ENCODE measurements at regions of chr3 and their contacts with region 1.

Region 1: DNA sequence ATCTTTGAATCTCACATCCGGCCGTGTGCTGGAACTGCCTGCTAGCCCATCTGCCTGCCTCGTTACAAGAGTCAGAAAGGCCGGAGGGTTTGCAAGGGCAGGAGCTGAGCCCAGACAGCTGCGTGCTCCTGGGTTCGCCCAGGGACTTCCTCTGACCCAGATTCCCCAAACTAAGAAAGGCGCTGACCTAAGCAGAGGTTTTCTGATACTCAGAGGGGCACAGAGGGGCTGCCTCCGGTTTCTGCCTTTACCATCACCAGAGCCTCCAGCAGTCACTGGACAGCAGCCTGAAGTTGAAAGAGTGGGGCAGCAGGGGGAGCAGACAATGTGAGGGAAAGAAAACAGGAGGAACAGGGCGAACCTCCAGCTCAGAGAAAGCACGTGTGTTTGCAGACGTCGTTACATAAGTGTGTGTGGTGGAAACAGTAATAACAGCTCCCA is 33.4 kb upstream of the RAD18 start:
- DNase-seq: no peak
- H3K4me3 ChIP-seq: no peak overlapping the region
- H3K27ac ChIP-seq: no peak overlapping the region
- H3K4me1 ChIP-seq: no peaks in the 10 kb centered on the region
- CTCF ChIP-seq: no peak

Region 2: DNA sequence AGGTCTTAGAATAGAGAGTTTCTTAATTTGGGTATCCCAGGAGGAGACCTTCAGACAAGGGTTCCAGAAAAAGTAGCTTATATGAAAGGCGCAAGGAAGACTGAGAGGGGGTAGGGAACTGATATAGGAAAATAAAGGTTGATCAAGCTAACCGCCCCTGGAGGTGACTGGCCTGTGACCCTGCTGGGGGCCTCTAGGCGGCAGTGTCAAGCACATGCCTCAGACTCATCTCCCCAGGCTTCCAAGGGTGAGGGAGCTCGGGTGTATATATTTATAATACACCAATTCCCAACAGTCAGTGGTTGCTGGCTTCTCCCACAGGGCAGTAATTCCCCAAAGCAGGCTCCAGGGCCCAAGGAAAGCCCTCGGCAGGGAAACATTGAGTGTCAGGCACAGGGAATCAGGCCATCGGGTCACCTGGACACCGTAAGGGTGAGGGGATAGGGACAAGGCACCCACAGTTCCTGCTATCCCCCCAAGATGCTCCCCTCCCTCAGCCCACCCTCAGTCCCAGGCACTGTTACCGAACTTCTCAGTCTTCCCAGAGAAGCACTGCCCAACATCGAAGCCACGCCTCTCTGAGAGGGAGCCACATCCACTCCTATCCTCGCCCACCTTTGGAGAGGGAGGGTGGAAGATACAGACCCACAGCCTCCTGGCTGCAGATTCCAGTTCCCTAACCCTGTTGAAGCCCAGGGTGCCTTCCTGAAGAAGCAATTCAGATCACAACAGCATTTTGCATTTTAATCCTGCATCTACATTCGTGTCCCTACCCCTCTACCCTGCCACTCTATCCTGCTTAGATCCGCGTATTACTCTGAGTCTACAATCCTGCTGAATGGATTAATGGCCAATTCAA is 282.6 kb before region 1 on chr3:
- CTCF ChIA-PET with region 1: no interaction called
- POLR2A ChIA-PET with region 1: no interaction called
- intact Hi-C with region 1: no loop called
- DNase-seq: peak; percentile 10
- H3K4me3 ChIP-seq: no peak overlapping the region
- H3K27ac ChIP-seq: no peak overlapping the region
- H3K4me1 ChIP-seq: no peaks in the 10 kb centered on the region
- CTCF ChIP-seq: peak; percentile 75

Region 3: GRCh38 chr3:9047452-9048346 is 51.0 kb after region 1 on chr3:
- CTCF ChIA-PET with region 1: no interaction called
- POLR2A ChIA-PET with region 1: interaction called, 12 read pairs
- intact Hi-C with region 1: no loop called
- DNase-seq: no peak
- H3K4me3 ChIP-seq: no peak overlapping the region
- H3K27ac ChIP-seq: no peak overlapping the region
- H3K4me1 ChIP-seq: no peaks in the 10 kb centered on the region
- CTCF ChIP-seq: no peak